Dorsolateral prefrontal cortex (tissue), 120 donors: ENCODE measurements at regions of chrX and their contacts with region 1.

Region 1: DNA sequence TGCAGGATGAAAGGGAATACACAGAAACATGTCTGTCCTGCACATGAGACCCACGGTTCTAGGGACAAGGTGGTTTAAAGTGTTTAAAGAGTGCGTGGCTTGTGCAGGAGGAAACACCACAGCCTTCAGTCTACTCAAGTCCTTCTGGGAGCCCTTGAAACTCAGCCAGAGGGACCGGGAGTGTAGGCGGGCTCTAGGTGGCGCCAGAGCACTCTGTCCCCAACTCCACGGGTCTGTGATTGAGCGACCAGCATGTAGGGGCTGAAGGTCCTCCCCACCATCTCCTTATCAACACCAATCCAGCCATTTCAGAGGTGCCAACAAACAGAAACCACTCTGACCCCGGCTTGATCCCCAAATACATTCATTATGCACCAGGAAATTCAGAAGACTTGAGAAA is 82.0 kb upstream of the CLDN34 start:
- DNase-seq: peak in 9 of 10 donors; percentile 42 to 81 (median 74)
- H3K4me3 ChIP-seq: no peak overlapping the region
- H3K27ac ChIP-seq: no peak overlapping the region
- H3K27me3 ChIP-seq: peaks cover 0 to 79% (median 7%) of the 10 kb centered on the region in 45 donors
- CTCF ChIP-seq: peak in 54 of 56 donors; percentile 33 to 75 (median 61)

Region 2: GRCh38 chrX:9935436-9935835 is 50.3 kb after region 1 on chrX:
- intact Hi-C with region 1: loop called in 1 of 2 experiments (anchors 10 kb)
- DNase-seq: no peak
- H3K4me3 ChIP-seq: no peak overlapping the region
- H3K27ac ChIP-seq: peak overlapping the region in 5 of 59 donors; percentile 15 to 29 (median 22)
- H3K27me3 ChIP-seq: peaks cover 0 to 45% (median under 1%) of the 10 kb centered on the region in 45 donors
- CTCF ChIP-seq: peak in 1 of 56 donors; percentile 11

Region 3: DNA sequence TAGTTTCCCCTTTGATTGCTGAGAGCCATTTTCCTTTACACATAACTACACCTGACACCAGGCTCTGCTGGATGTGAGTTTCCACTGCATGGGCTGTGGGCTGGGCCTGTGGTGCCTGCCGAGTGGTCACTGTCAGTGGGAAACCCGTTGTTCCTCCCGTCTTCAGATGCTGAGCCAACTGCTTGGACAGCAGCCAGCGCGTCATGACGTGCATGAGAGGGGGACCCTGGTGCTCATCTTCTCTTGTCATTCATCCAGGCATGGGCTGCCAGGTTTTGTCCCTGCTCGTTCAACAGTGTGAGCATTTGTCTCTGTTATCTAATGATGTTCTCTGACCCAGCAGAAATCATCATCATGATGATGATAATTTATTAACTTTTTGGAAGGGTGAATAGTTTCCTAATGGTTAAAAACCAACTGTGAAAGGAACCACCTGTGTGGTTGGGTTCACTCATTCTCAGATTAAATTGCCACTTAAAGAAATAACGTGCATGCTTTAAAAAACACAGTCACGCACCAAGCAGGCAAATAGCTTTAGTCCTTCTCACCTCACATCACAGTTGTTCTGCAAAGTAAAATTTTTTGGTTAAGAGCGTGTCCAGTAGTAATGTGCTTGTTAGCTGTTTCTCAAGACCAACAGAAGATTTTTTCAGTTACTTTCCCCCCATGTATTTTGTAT is 62.1 kb after region 1 on chrX:
- intact Hi-C with region 1: no loop called
- DNase-seq: no peak
- H3K4me3 ChIP-seq: no peak overlapping the region
- H3K27ac ChIP-seq: no peak overlapping the region
- H3K27me3 ChIP-seq: peaks cover 0 to 43% (median 0%) of the 10 kb centered on the region in 45 donors
- CTCF ChIP-seq: no peak

Region 4: DNA sequence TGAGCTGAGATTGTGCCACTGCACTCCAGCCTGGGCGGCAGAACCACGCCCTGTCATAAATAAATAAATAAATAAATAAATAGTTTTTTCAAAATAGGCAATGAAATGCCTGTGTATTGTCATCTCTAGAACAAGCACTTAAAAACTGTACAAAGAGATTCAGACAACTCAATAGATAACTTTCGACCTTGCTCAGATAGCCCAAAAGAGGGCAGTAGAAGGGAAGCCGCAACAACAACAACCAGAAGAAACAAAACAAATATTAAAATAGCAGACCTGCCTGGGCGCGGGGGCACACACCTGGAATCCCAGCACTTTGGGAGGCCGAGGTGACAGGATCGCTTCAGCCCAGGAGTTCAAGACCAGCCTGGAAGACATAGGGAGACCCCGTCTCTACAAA is 72.6 kb after region 1 on chrX:
- intact Hi-C with region 1: no loop called
- DNase-seq: no peak
- H3K4me3 ChIP-seq: no peak overlapping the region
- H3K27ac ChIP-seq: no peak overlapping the region
- H3K27me3 ChIP-seq: peaks cover 0 to 20% (median 0%) of the 10 kb centered on the region in 45 donors
- CTCF ChIP-seq: no peak

Region 5: DNA sequence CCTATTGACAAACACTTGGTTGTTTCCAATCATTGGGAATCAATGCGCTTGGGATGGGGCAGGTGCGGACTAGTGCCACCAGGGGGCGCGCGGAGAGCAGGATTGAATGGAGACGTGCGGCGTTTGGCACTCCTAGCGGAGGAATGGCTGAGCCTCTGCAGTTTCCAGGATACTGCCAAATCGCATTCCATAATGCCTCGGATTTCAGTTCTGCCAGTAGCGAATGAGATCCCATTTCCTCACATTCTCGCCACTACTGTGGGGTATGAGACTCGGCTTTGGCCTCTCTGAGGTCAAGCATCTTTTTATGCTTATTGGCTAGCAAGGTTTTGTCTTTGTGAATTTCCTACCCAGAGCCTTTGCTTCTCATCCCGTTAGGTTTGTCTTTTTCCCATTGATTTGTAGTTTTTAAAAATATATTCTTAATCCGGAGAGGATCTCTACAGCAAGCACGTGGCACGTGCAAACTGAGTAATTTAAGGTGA is 110.7 kb after region 1 on chrX:
- intact Hi-C with region 1: loop called in 1 of 2 experiments (anchors 5 kb)
- DNase-seq: peak; percentile 78 to 89 (median 86)
- H3K4me3 ChIP-seq: peak overlapping the region in 20 of 59 donors; percentile 7 to 43 (median 25)
- H3K27ac ChIP-seq: peak overlapping the region in 3 of 59 donors; percentile 1 to 36 (median 27)
- H3K27me3 ChIP-seq: peaks cover 0 to 32% (median 3%) of the 10 kb centered on the region in 45 donors
- CTCF ChIP-seq: peak; percentile 87 to 100 (median 98)

Region 6: GRCh38 chrX:10119399-10119990 is 234.3 kb after region 1 on chrX:
- intact Hi-C with region 1: loop called (anchors 5 kb)
- DNase-seq: peak in 6 of 10 donors; percentile 49 to 86 (median 68)
- H3K4me3 ChIP-seq: no peak overlapping the region
- H3K27ac ChIP-seq: peak overlapping the region in 41 of 59 donors; percentile 2 to 76 (median 46)
- H3K27me3 ChIP-seq: peaks cover 0 to 16% (median 0%) of the 10 kb centered on the region in 45 donors
- CTCF ChIP-seq: peak; percentile 99 to 100 (median 100)